Heart left ventricle (tissue), 16 donors: ENCODE measurements at regions of chr2 and their contacts with region 1.

Region 1: GRCh38 chr2:62787386-62787785 is 81.9 kb downstream of the EHBP1 start:
- DNase-seq: no peak
- ATAC-seq: peak; percentile 77 to 84 (median 79)
- H3K4me3 ChIP-seq: no peak overlapping the region
- H3K27ac ChIP-seq: no peak overlapping the region
- H3K4me1 ChIP-seq: peaks cover 0 to 10% (median 2%) of the 10 kb centered on the region in 12 donors
- H3K27me3 ChIP-seq: no peaks in the 10 kb centered on the region
- CTCF ChIP-seq: peak in 11 of 12 donors; percentile 19 to 58 (median 44)
- POLR2A ChIP-seq: no peak

Region 2: DNA sequence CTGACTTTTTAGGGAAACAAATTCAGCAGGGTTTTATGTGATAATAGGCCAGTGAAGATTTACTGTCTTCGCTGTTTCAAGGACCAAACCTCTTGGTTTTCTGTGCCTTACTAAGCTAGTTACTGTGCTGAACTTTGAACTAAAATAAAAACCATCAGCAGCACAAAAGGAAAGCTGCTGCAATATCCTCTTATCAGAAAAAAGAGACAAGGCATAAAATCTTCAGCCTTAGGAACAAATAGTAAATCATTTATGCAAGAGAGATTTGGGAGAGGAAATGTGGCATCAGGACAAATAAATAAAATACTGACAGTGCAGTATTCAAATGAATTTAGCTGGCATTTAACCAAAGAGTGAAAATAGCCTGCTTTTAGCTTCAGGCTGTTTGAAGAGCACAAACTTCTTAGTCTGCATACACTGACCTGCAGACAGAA is 146.0 kb before region 1 on chr2:
- intact Hi-C with region 1: no loop called
- DNase-seq: no peak
- ATAC-seq: no peak
- H3K4me3 ChIP-seq: no peak overlapping the region
- H3K27ac ChIP-seq: peak overlapping the region in 1 of 12 donors; percentile 40
- H3K4me1 ChIP-seq: peaks cover 0 to 9% (median 0%) of the 10 kb centered on the region in 12 donors
- H3K27me3 ChIP-seq: no peaks in the 10 kb centered on the region
- CTCF ChIP-seq: no peak
- POLR2A ChIP-seq: no peak

Region 3: GRCh38 chr2:62904344-62904743 is 117.0 kb after region 1 on chr2:
- intact Hi-C with region 1: loop called in 1 of 10 experiments (anchors 10 kb)
- DNase-seq: no peak
- ATAC-seq: no peak
- H3K4me3 ChIP-seq: no peak overlapping the region
- H3K27ac ChIP-seq: no peak overlapping the region
- H3K4me1 ChIP-seq: no peaks in the 10 kb centered on the region
- H3K27me3 ChIP-seq: no peaks in the 10 kb centered on the region
- CTCF ChIP-seq: no peak
- POLR2A ChIP-seq: no peak

Region 4: DNA sequence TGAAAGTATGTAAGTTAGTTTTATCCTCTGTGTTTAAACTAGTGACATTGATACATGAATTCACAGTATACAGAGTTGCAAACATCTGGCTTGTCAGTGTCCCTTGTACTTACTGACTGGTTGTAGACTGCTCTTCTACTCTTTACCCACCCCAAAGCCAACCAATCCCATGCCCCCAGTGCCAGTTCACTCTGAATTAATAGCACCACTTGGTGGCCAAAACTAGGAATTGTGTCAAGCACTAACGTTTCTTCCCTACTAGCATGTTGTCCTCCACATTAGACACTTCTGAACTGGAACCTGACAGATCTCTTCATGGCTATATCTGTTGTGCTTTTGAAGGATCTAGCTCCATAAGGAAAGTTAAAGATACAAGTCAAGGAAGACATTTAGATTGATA is 236.1 kb after region 1 on chr2:
- intact Hi-C with region 1: loop called in 4 of 10 experiments (anchors 5 to 10 kb)
- DNase-seq: no peak
- ATAC-seq: peak in 1 of 4 donors; percentile 42
- H3K4me3 ChIP-seq: no peak overlapping the region
- H3K27ac ChIP-seq: no peak overlapping the region
- H3K4me1 ChIP-seq: no peaks in the 10 kb centered on the region
- H3K27me3 ChIP-seq: no peaks in the 10 kb centered on the region
- CTCF ChIP-seq: peak in 9 of 12 donors; percentile 15 to 43 (median 24)
- POLR2A ChIP-seq: no peak

Region 5: DNA sequence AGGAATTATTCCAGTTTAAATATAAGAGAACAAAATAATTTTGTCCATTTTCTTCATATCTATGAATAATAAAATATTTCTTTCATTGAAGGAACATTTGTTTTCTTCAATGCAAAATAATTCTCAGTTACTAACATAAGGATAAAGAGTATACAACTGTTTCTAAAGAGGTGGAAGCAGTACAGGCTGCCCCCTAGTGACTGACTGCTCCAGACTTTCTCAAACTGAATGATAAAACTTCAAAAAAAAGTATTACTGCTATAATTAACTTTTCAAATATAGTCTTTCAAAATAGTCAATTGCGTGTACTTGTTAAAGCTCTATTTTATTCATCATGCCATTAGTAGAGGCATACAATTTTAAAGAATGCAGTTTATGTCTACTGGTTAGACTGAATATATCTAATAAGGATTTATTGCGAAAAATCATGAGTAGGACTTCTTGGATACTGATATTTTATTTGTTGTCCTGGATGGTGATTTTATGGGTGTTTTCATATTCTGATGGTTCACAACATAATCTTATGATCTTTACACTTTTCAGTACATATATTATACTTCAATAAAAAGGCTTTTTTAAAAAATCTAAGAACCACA is 700.8 kb after region 1 on chr2:
- intact Hi-C with region 1: loop called in 4 of 10 experiments (anchors 5 kb)
- DNase-seq: no peak
- ATAC-seq: no peak
- H3K4me3 ChIP-seq: no peak overlapping the region
- H3K27ac ChIP-seq: no peak overlapping the region
- H3K4me1 ChIP-seq: peaks cover 0 to 6% (median 0%) of the 10 kb centered on the region in 12 donors
- H3K27me3 ChIP-seq: no peaks in the 10 kb centered on the region
- CTCF ChIP-seq: peak; percentile 33 to 68 (median 57)
- POLR2A ChIP-seq: no peak